IMR-90 (cell line): ENCODE measurements at regions of chr1 and their contacts with region 1.

Region 1: DNA sequence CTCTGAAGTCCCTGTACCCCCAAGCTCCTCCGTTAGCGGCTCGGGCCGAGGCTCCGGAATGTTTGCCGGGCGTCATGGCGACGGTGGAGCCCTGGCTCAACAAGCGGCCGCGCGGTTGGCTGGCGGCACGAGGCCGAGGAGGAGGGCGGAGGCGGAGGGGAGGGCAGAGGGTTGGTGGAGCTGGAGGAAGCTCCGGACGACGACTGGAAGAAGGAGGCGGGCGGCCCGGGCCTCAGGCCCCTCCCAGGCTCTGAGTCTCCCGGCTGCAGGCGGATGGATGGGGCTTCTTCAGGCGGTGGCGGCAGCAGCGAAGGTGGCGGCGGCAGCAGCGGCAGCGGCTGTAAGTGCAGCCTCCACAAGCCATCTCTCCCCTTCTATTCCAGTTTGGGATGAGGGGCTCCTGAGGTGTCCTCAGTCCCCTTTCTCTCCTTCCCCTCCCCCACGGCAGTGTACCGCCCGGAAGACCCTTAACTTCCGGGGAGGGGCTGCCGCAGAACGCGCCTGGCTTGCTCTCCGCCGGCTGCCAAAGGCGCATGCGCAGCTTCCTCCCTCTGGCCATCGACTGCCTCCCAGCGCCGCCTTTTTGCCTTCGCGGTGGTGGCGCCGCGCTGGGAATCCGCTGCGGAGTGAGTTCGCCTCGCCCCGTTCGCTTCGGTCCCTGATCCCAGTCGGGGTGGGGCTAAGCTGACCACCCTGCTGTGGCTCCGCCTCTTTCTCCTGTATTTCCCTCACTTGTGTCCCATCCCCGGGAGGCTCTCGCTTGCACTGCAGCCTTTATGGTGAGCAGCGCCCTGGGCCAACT is at the starts of genes DNAI4 and MIER1:
- DNase-seq: peak; percentile 98
- ATAC-seq: peak; percentile 96
- H3K4me3 ChIP-seq: peak within 1 kb of the TSS; percentile 64
- H3K27ac ChIP-seq: peak within 1 kb of the TSS; percentile 92
- H3K4me1 ChIP-seq: no peaks in the 10 kb centered on the region
- H3K27me3 ChIP-seq: no peaks in the 10 kb centered on the region
- CTCF ChIP-seq: peak; percentile 5; the same call in 1 of the 2 replicates
- POLR2A ChIP-seq: peak; percentile 63
- RAD21 ChIP-seq: no peak
- total RNA-seq, gene DNAI4: 1.6 and 1.7 TPM in 2 replicates
- total RNA-seq, gene MIER1: 11.5 and 32.2 TPM in 2 replicates

Region 2: GRCh38 chr1:65812065-65812464 is 1112.9 kb before region 1 on chr1:
- CTCF ChIA-PET with region 1: no interaction called
- POLR2A ChIA-PET with region 1: no interaction called
- dilution Hi-C with region 1: no loop called
- in situ Hi-C with region 1: loop called (anchors 25 kb)
- intact Hi-C with region 1: no loop called
- DNase-seq: peak; percentile 95
- ATAC-seq: peak; percentile 97
- H3K4me3 ChIP-seq: no peak overlapping the region; the same call in 1 of the 2 replicates
- H3K27ac ChIP-seq: peak overlapping the region; percentile 56
- H3K4me1 ChIP-seq: peaks cover 3% of the 10 kb centered on the region
- H3K27me3 ChIP-seq: no peaks in the 10 kb centered on the region
- CTCF ChIP-seq: no peak
- POLR2A ChIP-seq: no peak
- RAD21 ChIP-seq: peak; percentile 21; the same call in 1 of the 2 replicates

Region 3: GRCh38 chr1:67005068-67005467 is 80.1 kb after region 1 on chr1:
- CTCF ChIA-PET with region 1: no interaction called
- POLR2A ChIA-PET with region 1: no interaction called
- dilution Hi-C with region 1: no loop called
- in situ Hi-C with region 1: no loop called
- intact Hi-C with region 1: no loop called
- DNase-seq: no peak
- ATAC-seq: no peak
- H3K4me3 ChIP-seq: no peak overlapping the region
- H3K27ac ChIP-seq: no peak overlapping the region
- H3K4me1 ChIP-seq: no peaks in the 10 kb centered on the region
- H3K27me3 ChIP-seq: no peaks in the 10 kb centered on the region
- CTCF ChIP-seq: no peak
- POLR2A ChIP-seq: no peak
- RAD21 ChIP-seq: no peak

Region 4: GRCh38 chr1:67355745-67356424 is 430.9 kb after region 1 on chr1:
- CTCF ChIA-PET with region 1: no interaction called
- POLR2A ChIA-PET with region 1: no interaction called
- dilution Hi-C with region 1: no loop called
- in situ Hi-C with region 1: no loop called
- intact Hi-C with region 1: no loop called
- DNase-seq: peak; percentile 71
- ATAC-seq: peak; percentile 69
- H3K4me3 ChIP-seq: no peak overlapping the region
- H3K27ac ChIP-seq: no peak overlapping the region
- H3K4me1 ChIP-seq: peaks cover 4% of the 10 kb centered on the region; the same call in 1 of the 2 replicates
- H3K27me3 ChIP-seq: no peaks in the 10 kb centered on the region
- CTCF ChIP-seq: no peak
- POLR2A ChIP-seq: no peak
- RAD21 ChIP-seq: no peak